Mammary epithelial cell (primary cell): ENCODE measurements at regions of chr11 and their contacts with region 1.

Region 1: GRCh38 chr11:33161120-33162005 is at the start of gene CSTF3:
- DNase-seq: peak; percentile 97
- H3K4me3 ChIP-seq: peak within 1 kb of the TSS; percentile 87 to 100 (median 99)
- H3K27ac ChIP-seq: peak within 1 kb of the TSS; percentile 97
- H3K4me1 ChIP-seq: peaks cover 24% of the 10 kb centered on the region
- H3K27me3 ChIP-seq: no peaks in the 10 kb centered on the region
- CTCF ChIP-seq: peak; percentile 2 to 38
- total RNA-seq, gene CSTF3: 21.3 to 32.9 TPM

Region 2: DNA sequence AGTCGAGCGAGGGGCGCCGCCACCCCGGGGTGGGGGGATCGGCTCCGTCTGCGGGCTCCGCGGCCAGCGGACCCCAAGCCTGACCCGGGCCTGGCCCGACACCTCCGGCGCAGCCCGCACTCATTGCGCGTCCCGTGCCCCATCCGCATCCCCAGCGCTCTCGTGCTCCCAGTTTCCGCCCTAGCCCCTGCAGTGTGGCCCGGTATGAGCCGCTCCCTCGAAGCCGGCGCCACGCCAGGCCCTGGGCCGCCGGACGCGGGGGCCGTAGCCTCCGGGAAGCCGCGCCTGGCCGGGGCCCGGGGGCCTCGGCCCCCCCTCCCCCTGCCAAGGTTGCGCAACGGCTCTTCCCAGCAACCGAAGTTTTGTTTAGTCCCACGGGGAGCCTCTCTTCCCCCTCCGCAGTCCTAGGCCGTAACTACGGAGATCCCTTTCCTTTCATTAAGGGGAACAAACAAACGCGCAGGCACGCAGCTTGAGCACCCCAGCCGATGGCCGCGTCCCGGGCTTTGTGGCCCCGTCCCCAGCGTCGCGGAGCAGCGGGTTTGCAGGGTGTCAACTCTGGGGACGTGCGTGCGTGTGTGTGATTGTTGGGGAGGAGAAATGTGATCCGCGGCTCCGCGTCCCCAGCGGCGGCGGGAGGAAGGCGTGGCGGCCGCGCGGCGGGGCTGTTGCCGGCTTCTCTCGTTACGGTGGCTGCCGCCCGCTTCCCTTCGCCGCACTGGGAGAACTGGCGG is 96.7 kb after region 1 on chr11:
- CTCF ChIA-PET with region 1: no interaction called
- dilution Hi-C with region 1: no loop called
- in situ Hi-C with region 1: no loop called
- intact Hi-C with region 1: loop called (anchors 1 kb)
- DNase-seq: peak; percentile 81
- H3K4me3 ChIP-seq: peak overlapping the region; percentile 57 to 94 (median 65)
- H3K27ac ChIP-seq: peak overlapping the region; percentile 96
- H3K4me1 ChIP-seq: peaks cover 18% of the 10 kb centered on the region
- H3K27me3 ChIP-seq: no peaks in the 10 kb centered on the region
- CTCF ChIP-seq: peak; percentile 9 to 29

Region 3: DNA sequence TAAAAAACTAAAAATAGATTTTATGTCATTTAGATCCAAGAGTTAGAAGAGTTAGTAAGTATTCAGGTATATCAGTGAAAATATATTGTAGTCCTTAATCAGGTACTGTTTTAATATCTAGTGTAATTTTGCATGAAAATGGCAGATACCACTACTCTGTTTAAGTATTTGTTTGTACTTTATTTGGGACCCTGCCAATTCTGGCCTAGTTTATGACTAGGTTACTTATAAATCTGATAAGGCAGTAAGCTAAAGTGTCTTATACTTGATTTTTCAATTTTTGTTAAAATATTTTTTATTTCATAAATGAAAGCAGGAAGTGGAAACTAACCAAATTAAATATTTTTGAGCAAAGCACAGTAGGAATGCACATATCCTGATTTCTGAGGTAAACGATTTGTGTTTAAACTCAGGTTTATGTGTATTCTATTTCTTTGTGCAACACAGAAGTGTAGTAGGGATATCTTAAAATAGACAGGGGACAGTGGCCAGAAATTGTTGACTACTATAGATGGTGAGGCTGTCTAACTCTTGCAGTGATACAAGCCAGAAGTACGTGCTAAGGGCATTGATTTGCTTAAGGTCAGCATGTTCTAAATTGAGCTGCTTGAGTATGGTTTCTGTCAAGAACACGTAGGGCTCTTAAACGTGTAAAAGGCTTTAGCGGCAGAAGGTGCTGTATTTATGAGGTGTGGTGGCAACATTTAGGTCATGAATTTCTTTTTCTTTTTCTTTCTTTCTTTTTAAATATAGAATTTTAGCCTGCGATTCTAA is 129.8 kb after region 1 on chr11:
- CTCF ChIA-PET with region 1: no interaction called
- dilution Hi-C with region 1: no loop called
- in situ Hi-C with region 1: no loop called
- intact Hi-C with region 1: no loop called
- DNase-seq: no peak
- H3K4me3 ChIP-seq: no peak overlapping the region
- H3K27ac ChIP-seq: no peak overlapping the region
- H3K4me1 ChIP-seq: no peaks in the 10 kb centered on the region
- H3K27me3 ChIP-seq: no peaks in the 10 kb centered on the region
- CTCF ChIP-seq: no peak

Region 4: GRCh38 chr11:33542921-33543320 is 381.6 kb after region 1 on chr11:
- CTCF ChIA-PET with region 1: no interaction called
- dilution Hi-C with region 1: no loop called
- in situ Hi-C with region 1: no loop called
- intact Hi-C with region 1: no loop called
- DNase-seq: peak; percentile 47
- H3K4me3 ChIP-seq: no peak overlapping the region
- H3K27ac ChIP-seq: no peak overlapping the region
- H3K4me1 ChIP-seq: peaks cover 8% of the 10 kb centered on the region
- H3K27me3 ChIP-seq: no peaks in the 10 kb centered on the region
- CTCF ChIP-seq: peak; percentile 84 to 88